Common myeloid progenitor, CD34-positive (primary cell): ENCODE measurements at regions of chr11 and their contacts with region 1.

Region 1: DNA sequence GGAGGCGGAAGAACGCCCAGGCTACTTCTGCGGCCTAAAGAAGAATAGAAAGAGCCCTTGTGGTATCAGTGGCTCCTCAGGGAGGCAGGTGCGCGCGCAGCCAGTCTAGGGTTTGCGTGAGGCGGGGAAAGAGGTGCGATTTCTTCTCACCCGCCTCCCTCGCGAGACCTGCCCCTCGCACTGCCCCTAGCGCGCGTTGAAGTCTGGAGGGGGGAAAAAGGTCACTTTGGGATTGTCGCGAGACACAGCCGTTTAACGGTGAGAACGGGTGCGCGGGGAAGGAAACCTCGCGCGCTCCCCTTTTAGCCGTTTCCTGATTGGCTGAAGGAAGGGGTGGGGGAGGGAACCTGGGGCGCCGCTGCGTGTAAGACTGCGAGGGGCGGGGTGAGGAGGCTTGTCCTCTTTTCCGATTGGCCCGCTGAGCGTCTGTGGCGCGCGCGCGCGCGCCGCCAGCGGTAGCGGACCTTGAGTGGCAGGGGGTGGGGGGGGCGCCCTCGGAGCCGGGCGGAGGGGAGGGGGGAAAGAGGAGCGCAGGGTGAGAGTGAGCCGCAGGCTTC is at the start of gene ZFP91:
- DNase-seq: peak; percentile 99 to 100 (median 99)
- H3K4me3 ChIP-seq: peak within 1 kb of the TSS; percentile 87 to 96 (median 92)
- H3K27ac ChIP-seq: peak within 1 kb of the TSS; percentile 100
- H3K4me1 ChIP-seq: peaks cover 46 to 67% (median 58%) of the 10 kb centered on the region in 4 experiments
- H3K27me3 ChIP-seq: no peaks in the 10 kb centered on the region

Region 2: DNA sequence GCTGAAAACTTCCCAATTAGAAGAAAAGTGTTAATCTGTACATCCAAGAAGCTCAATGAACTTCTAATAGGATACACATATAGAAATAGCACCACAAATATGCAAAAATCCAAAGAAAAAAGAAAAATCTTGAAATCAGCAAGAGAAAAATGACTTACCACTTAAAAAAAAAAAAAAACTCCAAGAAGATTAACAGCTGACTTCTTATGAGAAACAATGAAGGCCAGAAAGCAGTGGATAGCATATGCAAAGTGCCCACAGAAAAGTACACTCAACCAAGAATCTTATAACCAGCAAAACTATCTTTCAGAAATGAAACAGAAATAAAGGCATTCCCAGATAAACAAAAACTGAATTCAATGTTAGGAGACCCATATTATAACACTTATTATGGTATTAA is 106.8 kb before region 1 on chr11:
- CTCF ChIA-PET with region 1: no interaction called
- POLR2A ChIA-PET with region 1: no interaction called
- DNase-seq: peak in 2 of 3 donors; percentile 8 to 13
- H3K4me3 ChIP-seq: no peak overlapping the region
- H3K27ac ChIP-seq: no peak overlapping the region
- H3K4me1 ChIP-seq: no peaks in the 10 kb centered on the region
- H3K27me3 ChIP-seq: no peaks in the 10 kb centered on the region

Region 3: DNA sequence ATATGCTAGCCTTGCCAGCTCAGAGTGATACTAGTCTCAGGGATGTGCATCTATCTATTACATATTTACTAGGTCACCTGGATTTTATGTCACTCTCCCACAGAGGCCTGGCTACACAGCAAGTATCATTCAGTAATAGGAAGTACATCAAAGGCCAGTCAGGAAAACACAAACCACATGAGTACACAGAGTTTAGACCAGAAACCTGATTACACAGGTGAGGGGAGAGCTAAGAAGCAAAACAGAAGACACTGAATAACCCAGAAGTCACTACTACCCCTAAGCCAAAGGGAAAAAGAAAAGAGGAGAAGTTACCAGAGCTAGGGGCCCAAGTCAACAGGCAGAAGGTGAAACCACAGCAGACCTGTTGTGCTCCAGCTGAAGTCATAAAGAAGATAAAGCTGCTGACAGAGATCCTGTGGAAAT is 16.3 kb before region 1 on chr11:
- CTCF ChIA-PET with region 1: interaction called, 32 read pairs
- POLR2A ChIA-PET with region 1: interaction called, 13 read pairs
- DNase-seq: peak in 2 of 3 donors; percentile 62 to 70
- H3K4me3 ChIP-seq: no peak overlapping the region
- H3K27ac ChIP-seq: no peak overlapping the region
- H3K4me1 ChIP-seq: peaks cover 7 to 33% (median 28%) of the 10 kb centered on the region in 4 experiments
- H3K27me3 ChIP-seq: no peaks in the 10 kb centered on the region

Region 4: GRCh38 chr11:58616594-58616993 is 37.9 kb after region 1 on chr11:
- CTCF ChIA-PET with region 1: interaction called, 18 read pairs
- POLR2A ChIA-PET with region 1: no interaction called
- DNase-seq: no peak
- H3K4me3 ChIP-seq: no peak overlapping the region
- H3K27ac ChIP-seq: no peak overlapping the region
- H3K4me1 ChIP-seq: no peaks in the 10 kb centered on the region
- H3K27me3 ChIP-seq: no peaks in the 10 kb centered on the region